Activated naive CD4-positive, alpha-beta T cell treated with anti-CD3 and anti-CD28 coated beads for 36 hours (primary cell): ENCODE measurements at regions of chr12 and their contacts with region 1.

Region 1: GRCh38 chr12:54879150-54879549 is 24.8 kb downstream of the MUCL1 start:
- DNase-seq: peak; percentile 50
- H3K4me3 Mint-ChIP-seq: no peak overlapping the region
- H3K27ac Mint-ChIP-seq: peak overlapping the region; percentile 22
- H3K4me1 Mint-ChIP-seq: peaks cover 16% of the 10 kb centered on the region
- H3K27me3 Mint-ChIP-seq: peaks cover 8% of the 10 kb centered on the region

Region 2: DNA sequence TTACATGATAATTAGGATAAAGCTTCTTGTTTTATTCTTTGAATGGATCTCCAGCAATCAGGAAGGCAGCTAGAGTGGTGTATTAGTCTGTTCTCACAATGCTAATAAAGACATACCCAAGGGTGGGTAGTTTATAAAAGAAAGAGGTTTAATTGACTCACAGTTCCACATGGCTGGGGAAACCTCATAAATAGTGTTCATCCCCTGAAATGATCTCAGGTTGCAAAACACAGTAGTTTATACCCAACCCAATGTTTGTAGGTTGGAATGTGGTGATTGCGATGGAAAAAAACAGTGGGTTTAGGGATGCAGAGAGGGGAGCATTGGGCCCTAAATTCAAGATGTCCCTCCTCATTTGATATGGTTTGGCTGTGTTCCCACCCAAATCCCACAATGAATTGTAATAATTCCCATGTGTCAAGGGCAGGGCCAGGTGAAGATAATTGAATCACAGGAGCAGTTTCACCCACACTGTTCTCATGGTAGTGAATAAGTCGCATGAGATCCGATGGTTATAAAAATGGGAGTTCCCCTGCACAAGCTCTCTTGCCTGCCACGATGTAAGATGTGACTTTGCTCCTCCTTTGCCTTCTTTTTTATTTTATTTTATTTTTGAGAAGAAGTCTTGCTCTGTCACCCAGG is 13.3 kb before region 1 on chr12:
- CTCF ChIA-PET with region 1: interaction called, 5 read pairs
- intact Hi-C with region 1: loop called (anchors 1 kb)
- DNase-seq: peak; percentile 42
- H3K4me3 Mint-ChIP-seq: no peak overlapping the region
- H3K27ac Mint-ChIP-seq: no peak overlapping the region
- H3K4me1 Mint-ChIP-seq: peaks cover 36% of the 10 kb centered on the region
- H3K27me3 Mint-ChIP-seq: peaks cover 25% of the 10 kb centered on the region